AG04449 (cell line): ENCODE measurements at regions of chrX and their contacts with region 1.

Region 1: DNA sequence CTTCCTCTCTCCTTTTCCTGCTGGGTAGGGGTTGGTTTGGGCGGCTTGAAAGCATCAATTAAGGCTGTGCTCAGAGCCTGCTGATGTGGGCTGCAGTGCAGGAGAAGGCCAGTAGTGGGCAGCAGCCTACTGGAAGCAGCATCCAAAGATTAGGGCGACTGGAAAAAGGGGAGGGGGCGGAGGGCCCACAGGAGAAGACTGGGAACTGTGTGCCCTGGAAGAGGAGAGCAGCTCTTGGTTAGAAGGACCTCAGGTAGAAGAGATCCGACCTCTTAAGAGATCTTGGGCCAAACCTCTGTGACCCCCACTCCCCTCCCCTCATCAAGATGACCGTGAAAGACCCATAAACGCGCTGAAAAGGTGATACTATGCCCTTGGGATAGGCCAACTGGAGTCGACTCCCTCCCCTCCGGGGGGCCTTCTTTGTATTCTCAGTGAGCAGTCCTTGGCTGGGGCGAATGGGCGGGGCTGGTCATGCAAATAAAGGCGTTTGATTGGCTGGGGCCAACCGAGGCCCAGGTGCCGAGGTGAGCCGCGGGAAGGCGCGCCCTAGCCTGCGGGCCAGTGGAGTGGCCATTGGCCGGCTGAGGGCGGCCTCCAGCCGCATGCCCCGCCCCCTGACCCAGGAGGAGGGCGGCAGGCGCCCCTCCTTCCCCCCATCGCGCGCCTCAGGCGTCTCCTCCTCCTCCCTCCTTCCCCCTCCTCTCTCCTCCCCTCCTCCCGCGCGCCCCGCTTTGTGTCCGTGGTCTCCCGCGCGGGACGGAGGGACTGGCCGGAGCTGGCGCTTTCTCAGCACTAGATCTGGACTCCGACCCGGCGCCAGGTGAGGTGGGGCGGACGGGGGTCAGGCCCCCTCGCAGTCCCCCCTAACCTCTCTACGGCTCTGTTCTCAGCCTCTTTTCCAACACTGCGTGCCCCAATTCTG is 10.1 kb downstream of the DLG3 start:
- DNase-seq: no peak
- H3K4me3 ChIP-seq: peak overlapping the region; percentile 55
- CTCF ChIP-seq: peak; percentile 86

Region 2: GRCh38 chrX:70433848-70434351 is 20.8 kb before region 1 on chrX:
- CTCF ChIA-PET with region 1: interaction called, 24 read pairs
- POLR2A ChIA-PET with region 1: no interaction called
- DNase-seq: no peak
- H3K4me3 ChIP-seq: peak overlapping the region; percentile 73
- CTCF ChIP-seq: peak; percentile 83

Region 3: DNA sequence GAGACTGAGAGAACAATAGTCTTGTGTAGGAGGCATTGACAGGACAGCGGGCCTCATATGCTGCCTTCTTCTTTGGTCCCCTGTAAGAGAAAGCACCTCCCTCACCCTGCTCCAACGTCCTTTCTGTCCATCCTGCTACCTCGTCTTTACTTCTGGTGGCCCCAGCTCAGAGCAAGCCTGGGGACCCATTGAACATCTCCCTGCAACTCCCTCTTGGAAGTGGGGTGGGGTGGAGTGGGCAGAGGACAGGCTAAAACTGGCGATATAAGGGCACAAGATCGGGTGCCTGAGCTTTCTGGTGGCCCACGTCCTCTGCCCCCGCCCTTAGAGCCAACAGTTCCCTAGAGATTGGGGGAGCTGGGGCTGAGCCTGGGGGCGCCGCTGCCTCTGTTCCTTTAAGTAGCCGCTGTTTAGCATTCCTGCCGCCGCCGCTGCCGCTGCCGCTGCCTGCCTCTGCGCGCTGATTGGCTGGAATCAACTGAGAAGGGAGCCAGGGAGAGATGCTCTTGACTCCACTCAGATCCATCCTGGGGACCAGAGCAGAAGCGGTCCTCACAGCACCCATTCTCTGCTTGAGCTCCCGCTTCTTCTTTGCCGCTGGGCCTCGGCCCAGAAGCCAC is 10.3 kb before region 1 on chrX and contains the start of gene DLG3:
- CTCF ChIA-PET with region 1: interaction called, 19 read pairs
- POLR2A ChIA-PET with region 1: no interaction called
- DNase-seq: no peak
- H3K4me3 ChIP-seq: peak within 1 kb of the TSS; percentile 39
- CTCF ChIP-seq: no peak

Region 4: DNA sequence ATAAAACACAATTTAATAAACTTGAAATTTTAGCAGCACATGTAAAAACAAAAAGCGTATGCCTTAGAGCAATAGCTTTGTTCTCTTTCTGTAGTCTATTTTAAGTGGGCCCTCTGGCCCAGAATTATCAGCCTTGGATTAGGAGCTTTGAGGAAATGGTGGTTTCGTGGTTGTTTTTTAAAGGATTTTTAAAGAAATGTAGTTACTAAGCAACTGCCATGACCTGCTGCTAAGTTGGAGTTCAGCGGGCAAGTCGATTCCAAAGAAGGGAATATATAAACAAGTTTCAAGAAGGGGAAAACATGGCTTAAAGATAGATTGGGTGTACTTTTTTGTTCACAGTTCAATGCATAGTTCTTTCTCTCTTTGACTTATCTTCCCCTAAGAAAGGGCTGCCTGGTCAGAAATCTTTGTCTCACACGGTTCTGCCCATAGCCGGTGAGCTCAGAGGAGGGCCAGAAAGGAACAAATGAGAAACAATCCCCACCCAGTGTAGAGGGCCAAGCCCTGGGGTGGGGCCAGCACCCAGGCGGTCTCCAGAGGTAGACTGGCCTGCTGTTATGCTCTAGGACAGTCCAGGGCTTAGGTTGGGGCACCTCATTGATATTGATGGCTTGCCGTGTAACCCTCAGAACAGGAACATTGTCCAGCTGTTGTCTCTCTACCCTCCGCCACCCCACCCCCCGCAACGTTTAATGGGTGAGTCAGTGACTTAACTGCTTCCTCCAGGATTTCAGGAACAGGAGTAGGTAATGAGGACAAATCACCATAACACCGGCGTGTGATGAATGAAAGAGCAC is 22.4 kb after region 1 on chrX:
- CTCF ChIA-PET with region 1: interaction called, 14 read pairs
- POLR2A ChIA-PET with region 1: no interaction called
- DNase-seq: no peak
- H3K4me3 ChIP-seq: no peak overlapping the region
- CTCF ChIP-seq: no peak

Region 5: GRCh38 chrX:70554081-70554480 is 99.4 kb after region 1 on chrX:
- CTCF ChIA-PET with region 1: interaction called, 22 read pairs
- POLR2A ChIA-PET with region 1: no interaction called
- DNase-seq: no peak
- H3K4me3 ChIP-seq: no peak overlapping the region
- CTCF ChIP-seq: no peak

Region 6: DNA sequence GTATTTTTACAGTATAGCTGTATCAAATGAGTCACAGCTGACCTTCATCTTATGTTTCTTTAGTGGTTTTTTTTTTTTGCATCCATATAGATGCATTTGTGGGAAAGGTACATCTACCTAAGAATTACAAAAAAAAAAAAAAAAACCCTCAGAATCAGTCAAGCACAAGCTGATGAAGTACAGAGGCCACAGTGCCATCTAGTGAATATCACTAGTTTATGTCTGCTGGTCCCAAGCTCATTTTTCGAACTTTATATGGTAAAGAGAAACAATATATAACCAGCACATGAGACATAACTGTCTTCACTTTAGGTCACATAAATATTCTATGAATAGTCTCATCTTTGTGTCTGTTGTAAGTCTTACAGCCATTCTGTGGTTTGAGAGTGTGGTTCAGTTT is 210.0 kb after region 1 on chrX:
- CTCF ChIA-PET with region 1: interaction called, 23 read pairs
- POLR2A ChIA-PET with region 1: no interaction called
- DNase-seq: peak; percentile 0
- H3K4me3 ChIP-seq: no peak overlapping the region
- CTCF ChIP-seq: no peak